ENCODE measurements at regions of chr1 and their contacts with region 1.

Region 1: DNA sequence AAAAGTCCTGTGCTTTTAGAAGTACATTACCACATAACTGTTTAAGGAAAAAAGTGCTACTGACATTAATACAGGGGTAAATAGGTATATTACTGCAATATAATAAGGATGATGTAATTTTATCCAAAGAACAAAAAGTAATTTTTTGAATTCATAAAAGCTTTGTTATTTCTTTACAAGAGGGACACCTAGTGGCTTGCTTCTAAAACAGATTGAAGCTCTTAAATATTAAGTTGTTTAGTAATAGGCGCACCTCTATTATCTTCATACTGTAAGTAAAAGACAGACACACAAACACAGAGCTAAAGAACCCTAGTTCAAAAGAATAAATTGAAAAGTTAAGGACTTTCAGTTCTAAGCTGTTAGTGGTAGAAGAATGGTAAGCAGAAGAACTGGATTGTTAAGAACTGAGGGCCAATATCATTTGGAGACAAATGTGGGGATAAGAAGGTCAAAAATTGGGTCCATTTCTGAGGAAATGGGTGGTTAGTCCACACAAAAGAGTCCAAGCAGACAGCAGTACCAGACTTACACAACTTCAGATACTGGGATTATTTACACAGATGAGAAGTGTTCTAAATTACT is 15.4 kb downstream of the ZNHIT6 start:
- DNase-seq: no peak
- H3K4me3 ChIP-seq: no peak overlapping the region
- H3K27ac ChIP-seq: no peak overlapping the region
- H3K4me1 ChIP-seq: no peaks in the 10 kb centered on the region
- H3K27me3 ChIP-seq: no peaks in the 10 kb centered on the region
- CTCF ChIP-seq: peak in 5 of 6 experiments; percentile 19 to 56 (median 20)
- POLR2A ChIP-seq: no peak

Region 2: DNA sequence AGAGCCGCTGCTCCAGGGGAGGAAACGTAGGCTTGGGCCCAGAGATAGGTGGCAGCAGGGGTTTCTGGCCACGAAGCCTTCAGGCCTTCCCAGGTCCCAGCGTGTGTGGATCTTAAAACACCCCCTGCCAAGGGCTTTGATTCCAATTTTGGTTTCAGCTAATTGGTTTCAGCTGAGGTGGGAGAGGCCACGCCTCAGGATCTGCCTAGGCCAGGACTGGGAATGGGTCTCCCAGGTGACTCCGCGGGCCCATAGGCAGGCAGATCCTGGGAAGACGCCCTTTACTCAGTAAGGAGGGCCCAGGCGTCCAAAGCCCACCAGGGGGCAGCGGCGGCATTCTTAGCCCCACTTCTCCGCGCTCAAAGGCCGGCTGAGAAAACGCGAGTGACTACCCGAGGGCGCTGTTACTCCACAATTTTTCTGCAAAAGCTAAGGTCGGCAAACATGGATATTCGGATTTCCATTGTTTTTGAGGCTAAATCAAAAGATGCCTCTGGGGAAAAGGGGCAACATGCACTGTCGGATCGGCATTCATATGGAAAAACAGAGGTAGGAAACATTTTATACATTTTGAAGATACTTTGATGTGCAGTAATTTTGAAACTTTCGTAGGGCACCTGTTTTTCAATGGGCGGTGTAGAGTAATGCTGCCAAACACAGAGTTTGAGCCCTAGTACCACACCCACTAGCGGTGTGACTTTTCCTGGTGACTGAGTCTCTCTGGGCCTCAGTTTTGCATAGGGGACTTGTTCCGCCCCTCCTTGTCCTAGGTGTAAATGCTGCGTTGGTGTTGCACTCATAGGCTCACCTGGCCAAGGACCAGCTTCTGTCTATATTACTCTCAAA is 384.6 kb before region 1 on chr1:
- intact Hi-C with region 1: loop called (anchors 5 kb)
- DNase-seq: no peak
- H3K4me3 ChIP-seq: peak overlapping the region in 2 of 4 donors; percentile 4 to 27
- H3K27ac ChIP-seq: no peak overlapping the region
- H3K4me1 ChIP-seq: peaks cover 0 to 12% (median 9%) of the 10 kb centered on the region in 3 donors
- H3K27me3 ChIP-seq: no peaks in the 10 kb centered on the region
- CTCF ChIP-seq: peak; percentile 83 to 96 (median 93)
- POLR2A ChIP-seq: no peak

Region 3: GRCh38 chr1:85836736-85837135 is 143.9 kb after region 1 on chr1:
- intact Hi-C with region 1: no loop called
- DNase-seq: no peak
- H3K4me3 ChIP-seq: no peak overlapping the region
- H3K27ac ChIP-seq: no peak overlapping the region
- H3K4me1 ChIP-seq: no peaks in the 10 kb centered on the region
- H3K27me3 ChIP-seq: no peaks in the 10 kb centered on the region
- CTCF ChIP-seq: no peak
- POLR2A ChIP-seq: no peak